Posterior vena cava (tissue), 2 donors: ENCODE measurements at regions of chr17 and their contacts with region 1.

Region 1: DNA sequence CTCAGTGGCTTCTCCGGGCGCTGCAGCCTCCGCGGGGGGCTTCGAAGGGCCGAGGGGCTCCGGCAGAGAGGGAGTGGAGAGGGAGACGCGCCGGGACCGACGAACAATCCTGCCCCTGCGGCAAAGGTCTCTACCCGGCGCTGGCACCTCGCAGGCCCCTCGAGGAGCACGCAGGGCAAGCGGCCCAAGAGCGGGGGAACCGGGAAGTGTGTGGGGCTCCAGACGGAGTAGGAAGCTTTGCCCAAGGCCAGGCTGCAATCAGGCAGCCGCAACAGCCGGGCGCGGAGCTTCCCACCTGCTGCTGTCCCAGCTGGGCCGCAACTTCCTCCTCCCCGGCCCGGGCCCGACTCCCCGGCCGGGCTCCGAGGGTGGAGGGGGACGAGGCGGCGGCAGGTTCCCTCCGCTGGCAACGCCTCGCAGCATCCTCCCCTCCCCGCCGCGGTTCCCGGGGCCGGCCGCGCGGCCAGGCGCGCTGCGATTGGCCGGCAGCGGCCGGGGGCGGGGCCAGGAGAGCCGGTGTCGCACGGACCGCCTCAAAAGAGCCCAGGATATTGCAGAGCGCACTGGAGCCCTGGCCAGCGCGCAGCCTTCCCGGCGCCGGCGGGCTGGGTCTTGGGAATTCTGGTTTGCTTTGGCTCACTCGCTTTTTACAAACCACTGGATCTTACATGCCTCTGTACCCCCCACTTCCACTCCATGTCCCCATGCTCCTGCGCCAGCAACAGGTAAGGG is at the start of gene KCNJ2:
- DNase-seq: peak; percentile 95
- total RNA-seq, gene KCNJ2: 3.1 to 3.2 TPM

Region 2: GRCh38 chr17:70307430-70308225 is 138.5 kb after region 1 on chr17:
- intact Hi-C with region 1: no loop called
- DNase-seq: no peak

Region 3: DNA sequence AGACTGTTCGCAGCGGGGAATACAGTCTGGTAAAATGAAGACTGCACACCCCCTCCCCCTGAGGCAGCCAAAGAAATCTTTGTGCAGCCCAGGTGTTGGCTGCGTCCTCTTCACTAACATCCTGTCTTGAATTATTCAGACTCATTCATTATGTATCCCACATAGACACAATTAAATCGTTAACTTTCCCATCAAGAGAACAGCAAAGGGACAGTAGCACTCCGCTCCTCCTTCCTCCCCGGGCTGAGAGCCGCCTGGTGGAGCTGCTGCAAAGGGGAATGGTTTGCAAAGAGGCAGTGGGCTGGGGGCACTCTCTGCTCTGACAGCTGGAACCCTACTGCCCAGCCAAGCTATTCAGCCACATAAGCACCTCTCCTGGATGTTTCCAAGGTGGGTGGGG is 1661.7 kb after region 1 on chr17:
- intact Hi-C with region 1: loop called in 1 of 2 experiments (anchors 5 kb)
- DNase-seq: no peak